Motor neuron (in vitro differentiated cells): ENCODE measurements at regions of chr11 and their contacts with region 1.

Region 1: DNA sequence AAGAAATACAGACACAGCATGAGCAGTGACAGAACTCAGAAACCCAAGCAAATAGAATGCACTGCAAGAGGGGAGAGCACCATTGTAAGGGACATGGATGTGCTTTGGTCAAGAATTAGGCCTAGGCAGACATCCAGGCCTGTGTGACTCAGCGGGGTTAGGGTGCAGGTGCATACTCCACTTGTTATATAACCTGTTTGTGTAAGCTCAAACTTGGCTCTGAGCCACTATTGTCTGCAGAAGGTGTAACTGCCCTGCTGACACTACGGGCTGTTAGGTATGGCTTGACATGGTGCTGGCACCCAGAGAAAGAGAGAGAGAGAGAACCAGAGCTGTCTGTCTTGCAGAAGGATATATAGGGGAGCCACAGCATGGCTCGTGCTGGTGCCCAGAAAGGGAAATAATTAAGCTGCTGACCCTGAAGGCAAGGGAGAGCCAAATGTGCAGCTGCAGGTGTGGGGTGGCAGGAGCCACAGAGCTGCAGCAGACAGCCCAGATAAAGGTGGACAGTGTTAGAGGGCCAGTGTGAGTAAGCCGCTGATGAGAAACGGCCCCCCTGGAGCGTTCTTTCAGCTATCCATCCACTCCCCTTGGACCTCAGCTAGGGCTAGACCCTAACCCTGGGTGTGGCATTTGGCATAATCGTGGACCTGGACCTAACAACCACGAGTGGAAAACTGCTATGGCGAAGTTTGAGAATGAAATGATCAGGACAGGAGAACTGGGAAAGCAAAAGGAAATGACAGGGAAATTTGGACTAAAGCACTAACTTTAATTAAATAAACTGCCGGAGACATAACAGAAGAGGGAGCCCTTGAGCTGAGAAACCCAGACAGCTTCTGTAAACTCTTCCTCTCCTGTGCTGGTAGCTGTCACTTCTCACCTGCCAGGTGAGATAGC is 253.0 kb upstream of the CCDC179 start:
- ATAC-seq: peak in 6 of 8 experiments; percentile 37 to 66 (median 42)
- H3K4me3 ChIP-seq: no peak overlapping the region
- H3K27ac ChIP-seq: no peak overlapping the region
- H3K4me1 ChIP-seq: peaks cover 2 to 18% of the 10 kb centered on the region in 2 donors

Region 2: DNA sequence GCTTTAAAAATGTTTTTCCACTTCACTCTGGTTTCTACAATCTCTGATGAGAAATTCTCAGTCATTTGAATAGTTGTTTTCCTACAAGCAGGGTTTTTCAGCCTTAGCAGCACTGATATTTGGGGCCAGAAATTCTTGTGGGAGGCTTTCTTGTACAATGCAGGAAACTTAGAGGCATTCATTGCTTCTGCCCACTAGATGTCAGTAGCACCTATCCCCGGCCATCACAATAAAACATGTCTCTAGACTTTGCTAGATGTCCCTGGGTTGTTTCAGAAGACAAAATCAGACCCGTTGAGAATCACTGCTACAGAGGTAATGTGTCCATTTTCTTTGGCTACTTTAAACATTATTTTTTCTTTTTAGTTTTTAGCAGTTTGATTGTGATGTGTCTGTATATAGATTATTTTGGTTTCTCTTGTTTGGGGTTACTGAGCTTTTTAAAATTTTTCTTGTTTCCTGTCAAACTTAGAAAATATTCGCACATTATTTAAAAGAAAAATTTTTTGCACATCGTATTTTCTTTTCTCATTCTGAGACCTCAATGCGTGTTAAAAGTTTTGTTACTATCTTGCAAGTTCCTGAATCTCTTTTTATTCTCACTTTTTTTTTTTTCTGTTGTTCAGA is 192.2 kb before region 1 on chr11:
- in situ Hi-C with region 1: loop called in 1 of 9 experiments (anchors 25 kb)
- ATAC-seq: peak in 6 of 8 experiments; percentile 59 to 90 (median 78)
- H3K4me3 ChIP-seq: no peak overlapping the region
- H3K27ac ChIP-seq: no peak overlapping the region
- H3K4me1 ChIP-seq: no peaks in the 10 kb centered on the region

Region 3: GRCh38 chr11:23010790-23011335 is 102.4 kb before region 1 on chr11:
- in situ Hi-C with region 1: no loop called
- ATAC-seq: no peak
- H3K4me3 ChIP-seq: no peak overlapping the region
- H3K27ac ChIP-seq: no peak overlapping the region
- H3K4me1 ChIP-seq: no peaks in the 10 kb centered on the region